GM23248 (cell line): ENCODE measurements at regions of chr14 and their contacts with region 1.

Region 1: DNA sequence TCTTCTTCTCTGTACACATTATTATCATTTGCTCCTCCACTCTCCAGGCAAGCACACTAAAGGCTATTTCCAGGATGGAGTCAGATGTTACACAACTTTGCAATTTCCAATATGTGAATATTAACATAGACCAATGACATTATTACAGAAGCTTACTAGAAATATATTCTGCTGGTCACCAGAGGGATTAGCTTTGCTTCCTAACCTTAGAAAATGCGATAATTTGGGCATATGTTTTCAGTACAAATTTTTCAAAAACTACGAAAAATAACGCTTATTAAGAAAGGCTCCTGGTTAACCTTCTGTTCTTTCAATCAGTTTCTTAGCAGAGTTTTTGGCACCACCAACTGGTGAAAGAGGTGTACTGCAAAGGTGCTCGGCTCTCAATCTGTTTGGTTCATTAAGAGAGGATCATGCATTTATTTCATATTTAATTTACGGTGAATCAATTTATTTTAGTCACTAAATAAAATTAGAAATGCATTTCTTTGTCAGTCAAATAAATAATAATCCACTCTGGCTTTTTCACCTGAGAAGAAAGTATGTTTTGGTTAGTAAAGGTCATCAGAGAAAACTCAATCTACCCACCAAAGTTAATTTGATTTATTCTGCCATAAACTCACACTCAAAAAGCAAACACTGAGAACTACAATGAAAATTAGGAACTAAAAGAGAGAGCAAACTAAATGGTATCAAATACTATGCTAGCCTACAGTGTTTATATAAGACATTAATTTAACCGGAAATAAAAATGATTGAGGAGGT is 39.2 kb downstream of the EFCAB11 start:
- DNase-seq: peak; percentile 86
- H3K4me3 ChIP-seq: no peak overlapping the region
- H3K27ac ChIP-seq: peak overlapping the region; percentile 42
- H3K4me1 ChIP-seq: peaks cover 45% of the 10 kb centered on the region
- H3K27me3 ChIP-seq: no peaks in the 10 kb centered on the region

Region 2: DNA sequence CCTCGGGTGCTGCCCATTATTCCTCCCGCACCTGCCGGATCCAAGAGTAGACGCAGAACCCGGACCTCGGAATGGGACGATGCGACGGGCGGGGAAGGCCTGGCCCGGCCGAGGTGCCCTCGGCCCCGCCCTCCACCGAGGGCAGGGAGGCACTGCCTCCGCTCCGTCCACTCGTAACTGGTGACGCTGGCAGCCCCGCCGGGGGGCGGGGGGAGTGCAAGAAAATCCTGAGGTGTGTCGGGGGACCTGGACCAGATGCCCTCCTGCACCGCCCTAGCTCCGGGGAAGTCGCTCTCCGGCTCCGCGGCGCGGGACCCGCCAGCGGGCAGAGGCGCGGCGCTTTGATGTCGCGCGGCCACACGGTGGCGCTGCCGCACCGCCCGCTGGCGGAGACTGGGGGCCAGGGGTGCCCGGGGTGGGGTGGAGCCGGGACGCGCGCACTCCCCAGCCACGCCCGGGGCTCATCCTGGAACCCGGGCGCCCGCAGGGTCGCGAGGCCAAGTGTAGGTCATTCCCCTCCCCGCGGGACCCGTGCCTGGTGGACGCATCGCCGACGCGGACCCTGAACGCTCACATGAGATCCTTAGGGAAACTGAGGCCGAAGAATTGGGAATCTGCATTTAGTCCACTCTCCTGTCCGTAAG is 888.1 kb before region 1 on chr14:
- in situ Hi-C with region 1: loop called (anchors 10 kb)
- DNase-seq: peak; percentile 69
- H3K4me3 ChIP-seq: peak overlapping the region; percentile 67
- H3K27ac ChIP-seq: no peak overlapping the region
- H3K4me1 ChIP-seq: peaks cover 10% of the 10 kb centered on the region; the same call in 1 of the 2 replicates
- H3K27me3 ChIP-seq: no peaks in the 10 kb centered on the region